ENCODE measurements at regions of chr5 and their contacts with region 1.

Region 1: GRCh38 chr5:317086-317811 is 4.3 kb upstream of the AHRR start:
- DNase-seq: peak; percentile 79
- H3K4me3 Mint-ChIP-seq: no peak overlapping the region
- H3K27ac Mint-ChIP-seq: peak overlapping the region; percentile 60
- H3K4me1 Mint-ChIP-seq: no peaks in the 10 kb centered on the region
- H3K27me3 Mint-ChIP-seq: peaks cover 14% of the 10 kb centered on the region
- CTCF ChIP-seq: no peak

Region 2: DNA sequence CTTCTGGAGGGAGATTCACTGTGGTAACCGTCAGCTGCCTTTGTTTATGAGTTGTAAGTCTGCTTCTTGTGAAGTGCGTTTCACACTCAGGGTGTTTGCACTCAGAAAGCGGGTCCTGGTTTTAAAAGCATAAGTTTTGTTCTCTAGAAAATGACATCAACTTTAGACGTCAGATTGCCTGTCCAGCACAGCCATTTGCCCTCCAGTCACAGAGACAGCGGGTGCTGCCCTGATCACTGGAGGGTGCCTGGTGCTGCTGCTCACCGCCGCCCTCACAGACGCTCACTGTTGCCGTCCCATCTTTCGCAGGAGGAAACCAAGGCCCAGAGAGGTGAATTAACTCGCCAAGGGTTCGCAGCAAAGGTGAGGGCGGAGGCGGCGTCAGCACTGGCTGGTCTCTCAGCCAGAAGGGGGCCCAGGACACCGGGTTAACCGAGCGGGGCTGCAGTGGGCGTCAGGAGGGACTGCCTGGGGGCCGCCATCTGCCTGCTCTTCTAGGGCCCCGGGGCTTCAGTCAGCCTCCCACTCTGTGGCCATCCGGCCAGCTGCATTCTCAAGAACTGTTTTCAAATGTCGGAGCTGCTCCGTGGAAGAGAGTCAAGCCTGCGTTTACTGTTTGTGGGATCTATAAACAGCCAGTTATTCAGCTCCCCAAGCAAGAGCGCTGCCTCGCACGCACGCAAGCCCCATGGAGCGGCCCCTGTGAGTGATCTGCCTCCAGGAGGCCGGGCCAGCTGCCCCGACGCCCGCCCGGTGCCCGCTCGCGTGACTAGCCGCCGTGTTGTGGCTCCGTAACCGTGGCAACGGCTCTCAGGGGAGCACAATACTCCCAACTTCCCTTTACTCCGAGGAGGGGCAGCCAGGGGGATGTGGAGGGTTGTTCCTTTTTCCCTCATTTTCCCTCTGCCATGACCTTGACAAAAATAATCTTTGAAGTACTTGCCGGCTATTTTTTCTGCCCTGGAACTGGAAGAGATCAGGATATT is 82.3 kb after region 1 on chr5:
- CTCF ChIA-PET with region 1: no interaction called
- intact Hi-C with region 1: no loop called
- DNase-seq: peak; percentile 90
- H3K4me3 Mint-ChIP-seq: peak overlapping the region; percentile 67
- H3K27ac Mint-ChIP-seq: peak overlapping the region; percentile 91
- H3K4me1 Mint-ChIP-seq: peaks cover 14% of the 10 kb centered on the region
- H3K27me3 Mint-ChIP-seq: no peaks in the 10 kb centered on the region
- CTCF ChIP-seq: no peak

Region 3: DNA sequence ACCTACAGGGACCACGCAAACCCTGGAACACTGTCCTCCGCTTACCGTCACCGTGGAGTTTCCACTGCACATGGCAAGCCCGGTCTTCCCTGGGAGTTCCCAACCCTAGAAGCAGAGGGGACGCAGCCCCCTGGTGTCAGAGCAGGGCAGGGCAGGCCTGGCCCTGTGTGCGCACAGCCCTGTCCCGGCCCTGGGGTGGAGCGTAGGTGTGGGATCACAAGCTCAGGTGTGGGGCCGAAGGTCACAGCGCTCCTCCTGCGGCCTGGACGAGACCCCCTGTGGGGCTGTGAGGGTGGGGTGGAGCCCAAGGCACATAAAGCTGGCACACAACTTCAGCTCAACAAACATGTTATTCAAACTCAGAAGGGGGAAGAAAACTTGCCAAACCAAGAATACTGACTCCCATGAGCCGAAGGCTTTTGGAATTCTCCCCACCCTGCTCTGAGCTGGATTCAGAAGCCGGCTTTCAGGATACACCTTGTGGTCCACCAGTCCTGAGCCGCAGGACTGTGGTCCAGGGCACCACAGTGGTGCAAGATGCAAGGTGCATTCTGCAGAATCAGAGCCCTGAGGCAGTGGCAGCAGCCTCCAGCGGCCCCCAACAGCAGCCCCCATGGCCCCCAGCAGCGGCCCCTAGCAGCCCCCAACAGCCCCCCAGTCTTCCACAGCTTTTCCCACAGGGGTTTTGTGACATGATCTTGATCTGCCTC is 113.9 kb after region 1 on chr5:
- CTCF ChIA-PET with region 1: interaction called, 13 read pairs
- intact Hi-C with region 1: loop called (anchors 5 kb)
- DNase-seq: peak; percentile 81
- H3K4me3 Mint-ChIP-seq: no peak overlapping the region
- H3K27ac Mint-ChIP-seq: no peak overlapping the region
- H3K4me1 Mint-ChIP-seq: peaks cover 12% of the 10 kb centered on the region
- H3K27me3 Mint-ChIP-seq: peaks cover 9% of the 10 kb centered on the region
- CTCF ChIP-seq: peak; percentile 71